Activated CD8-positive, alpha-beta T cell treated with anti-CD3 and anti-CD28 coated beads for 36 hours (primary cell): ENCODE measurements at regions of chr6 and their contacts with region 1.

Region 1: GRCh38 chr6:139161817-139162284 is 27.0 kb downstream of the HECA start:
- DNase-seq: peak; percentile 85
- ATAC-seq: peak; percentile 80
- H3K4me3 Mint-ChIP-seq: peak overlapping the region; percentile 47
- H3K27ac Mint-ChIP-seq: peak overlapping the region; percentile 99
- H3K4me1 Mint-ChIP-seq: peaks cover 85% of the 10 kb centered on the region
- H3K27me3 Mint-ChIP-seq: no peaks in the 10 kb centered on the region
- CTCF ChIP-seq: no peak

Region 2: DNA sequence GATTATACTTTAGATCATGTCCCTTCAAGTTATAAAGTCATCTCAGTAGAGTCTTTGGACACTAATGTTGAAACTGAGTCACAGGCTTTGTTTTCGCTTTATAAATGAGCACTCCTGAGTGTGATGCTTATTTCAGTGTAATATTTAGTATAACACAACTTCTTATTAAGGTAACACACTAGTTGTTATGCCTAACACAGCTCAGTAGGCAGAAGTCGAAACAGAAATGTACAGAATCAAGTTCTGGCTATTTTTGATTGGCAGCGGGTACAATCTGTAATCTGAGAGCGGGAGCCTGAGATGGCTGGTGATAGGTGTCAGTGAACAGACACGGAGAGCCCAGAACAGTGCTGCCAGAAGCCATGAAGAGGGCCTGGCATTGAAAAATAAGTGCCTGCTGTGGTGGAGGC is 15.5 kb before region 1 on chr6:
- CTCF ChIA-PET with region 1: interaction called, 10 read pairs
- POLR2A ChIA-PET with region 1: interaction called, 89 read pairs
- intact Hi-C with region 1: no loop called
- DNase-seq: peak; percentile 55
- ATAC-seq: peak; percentile 69
- H3K4me3 Mint-ChIP-seq: peak overlapping the region; percentile 50
- H3K27ac Mint-ChIP-seq: peak overlapping the region; percentile 89
- H3K4me1 Mint-ChIP-seq: peaks cover 92% of the 10 kb centered on the region
- H3K27me3 Mint-ChIP-seq: no peaks in the 10 kb centered on the region
- CTCF ChIP-seq: no peak